ENCODE measurements at regions of chr19 and their contacts with region 1.

Region 1: GRCh38 chr19:20776083-20777076 is at the start of gene ZNF66:
- DNase-seq: peak; percentile 95
- H3K4me3 Mint-ChIP-seq: peak within 1 kb of the TSS; percentile 99
- H3K27ac Mint-ChIP-seq: peak within 1 kb of the TSS; percentile 94
- H3K4me1 Mint-ChIP-seq: peaks cover 7% of the 10 kb centered on the region
- H3K27me3 Mint-ChIP-seq: no peaks in the 10 kb centered on the region
- total RNA-seq, gene ZNF66: 6.0 to 7.5 TPM

Region 2: DNA sequence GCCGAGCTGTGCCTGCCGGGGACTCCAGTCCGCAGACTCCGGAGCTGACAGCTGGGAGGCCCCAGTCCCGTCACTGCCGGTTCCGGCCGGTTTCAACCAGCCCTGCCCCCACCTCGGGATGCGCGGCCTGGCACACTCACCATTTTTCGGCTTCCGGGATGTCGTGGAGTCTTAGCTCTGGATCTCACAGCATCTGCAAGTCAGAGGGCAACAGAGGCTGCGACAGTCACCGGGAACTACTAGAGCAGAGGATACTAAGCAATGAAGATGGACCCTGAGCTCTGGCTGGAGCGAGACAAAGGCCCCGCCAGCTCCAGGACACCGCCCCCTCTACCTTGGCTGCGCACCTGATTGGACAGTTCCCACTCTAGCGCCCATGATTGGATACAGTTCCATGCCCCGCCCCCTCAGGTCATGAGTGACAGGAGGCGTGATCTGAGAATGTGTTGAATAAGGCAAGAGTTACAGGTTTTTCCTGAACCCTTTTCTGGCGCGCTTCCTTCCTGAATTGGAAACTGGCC is 737.1 kb before region 1 on chr19 and contains the start of gene ZNF682:
- CTCF ChIA-PET with region 1: no interaction called
- POLR2A ChIA-PET with region 1: interaction called, 10 read pairs
- DNase-seq: peak; percentile 92
- H3K4me3 Mint-ChIP-seq: peak within 1 kb of the TSS; percentile 92
- H3K27ac Mint-ChIP-seq: peak within 1 kb of the TSS; percentile 89
- H3K4me1 Mint-ChIP-seq: peaks cover 20% of the 10 kb centered on the region
- H3K27me3 Mint-ChIP-seq: no peaks in the 10 kb centered on the region
- total RNA-seq, gene ZNF682: 4.8 to 5.5 TPM

Region 3: GRCh38 chr19:20423381-20424197 is 352.8 kb before region 1 on chr19:
- CTCF ChIA-PET with region 1: interaction called, 4 read pairs
- POLR2A ChIA-PET with region 1: interaction called, 22 read pairs
- DNase-seq: peak; percentile 42
- H3K4me3 Mint-ChIP-seq: peak overlapping the region; percentile 97
- H3K27ac Mint-ChIP-seq: peak overlapping the region; percentile 97
- H3K4me1 Mint-ChIP-seq: peaks cover 13% of the 10 kb centered on the region
- H3K27me3 Mint-ChIP-seq: no peaks in the 10 kb centered on the region

Region 4: DNA sequence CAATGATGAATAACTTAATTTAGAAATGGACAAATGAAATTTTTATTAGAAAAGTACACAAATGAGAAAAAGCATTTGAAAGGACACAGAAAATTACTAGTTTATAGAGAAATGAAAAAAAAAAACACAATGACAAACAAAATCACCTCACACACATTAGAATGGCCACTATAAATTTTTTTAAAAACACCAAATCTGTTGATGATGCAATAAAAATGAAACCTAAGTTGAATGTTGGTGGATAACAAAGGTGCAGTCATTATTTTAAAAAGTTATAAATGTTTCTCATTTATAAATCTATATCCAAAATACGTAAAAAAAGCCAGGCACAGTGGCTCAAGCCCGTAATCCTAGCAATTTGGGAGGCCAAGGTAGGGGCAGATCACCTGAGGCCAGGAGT is 135.8 kb before region 1 on chr19:
- CTCF ChIA-PET with region 1: no interaction called
- POLR2A ChIA-PET with region 1: no interaction called
- DNase-seq: no peak
- H3K4me3 Mint-ChIP-seq: no peak overlapping the region
- H3K27ac Mint-ChIP-seq: no peak overlapping the region
- H3K4me1 Mint-ChIP-seq: no peaks in the 10 kb centered on the region
- H3K27me3 Mint-ChIP-seq: no peaks in the 10 kb centered on the region

Region 5: GRCh38 chr19:20661150-20661819 is 115.1 kb before region 1 on chr19 and contains the start of gene ZNF626:
- CTCF ChIA-PET with region 1: interaction called, 5 read pairs
- POLR2A ChIA-PET with region 1: interaction called, 32 read pairs
- DNase-seq: peak; percentile 92
- H3K4me3 Mint-ChIP-seq: peak within 1 kb of the TSS; percentile 88
- H3K27ac Mint-ChIP-seq: peak within 1 kb of the TSS; percentile 84
- H3K4me1 Mint-ChIP-seq: peaks cover 23% of the 10 kb centered on the region
- H3K27me3 Mint-ChIP-seq: no peaks in the 10 kb centered on the region
- total RNA-seq, gene ZNF626: 7.6 to 8.5 TPM

Region 6: DNA sequence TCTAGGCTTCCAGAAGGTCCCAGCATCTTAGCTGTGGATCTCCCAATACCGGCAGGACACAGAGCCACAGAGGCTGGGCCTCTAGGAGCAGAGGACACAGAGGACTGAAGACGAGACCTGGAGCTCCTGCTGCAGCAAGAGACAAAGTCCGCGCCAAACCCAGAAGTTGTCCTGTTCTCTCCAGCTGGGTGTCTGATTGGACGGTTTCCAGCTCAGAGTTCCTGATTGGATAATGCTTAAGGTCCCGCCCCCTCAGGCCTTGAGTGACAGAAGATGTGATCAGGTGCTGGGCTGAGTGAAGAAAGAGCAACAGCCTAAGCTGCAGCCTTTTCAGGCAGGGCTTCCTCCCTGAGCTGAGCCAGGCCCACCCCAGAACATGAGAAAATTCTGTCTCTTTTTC is 86.8 kb after region 1 on chr19:
- CTCF ChIA-PET with region 1: no interaction called
- POLR2A ChIA-PET with region 1: no interaction called
- DNase-seq: no peak
- H3K4me3 Mint-ChIP-seq: no peak overlapping the region
- H3K27ac Mint-ChIP-seq: no peak overlapping the region
- H3K4me1 Mint-ChIP-seq: no peaks in the 10 kb centered on the region
- H3K27me3 Mint-ChIP-seq: no peaks in the 10 kb centered on the region

Region 7: DNA sequence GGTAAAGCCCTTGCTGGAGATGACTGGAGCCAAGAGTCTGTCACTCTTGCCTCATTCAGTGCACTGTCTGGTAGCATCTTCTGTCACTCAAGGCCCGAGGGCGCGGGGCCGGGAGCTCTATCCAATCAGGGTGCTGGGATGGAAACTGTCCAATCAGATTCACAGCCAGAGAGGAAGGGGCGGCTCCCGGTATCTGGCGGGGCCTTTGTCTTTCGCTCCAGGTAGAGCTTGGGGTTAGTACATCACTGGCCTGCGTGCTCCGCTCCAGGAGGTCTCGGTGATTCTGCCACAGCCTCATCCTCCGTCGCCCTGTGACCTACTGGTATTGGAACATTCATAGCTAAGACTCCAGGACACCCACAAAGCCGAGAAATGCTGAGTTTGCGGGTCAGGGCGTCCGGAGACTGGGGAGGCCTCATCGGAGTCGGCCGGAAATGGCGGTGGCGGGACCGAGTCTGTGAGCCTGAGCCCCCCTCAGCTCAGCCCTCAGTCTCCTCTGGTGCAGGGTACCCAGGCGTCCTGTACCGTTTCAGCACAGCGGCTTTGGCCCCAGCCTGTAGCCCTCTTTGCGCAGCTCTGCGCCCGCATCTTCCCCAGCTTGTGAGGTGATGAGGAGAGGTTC is 223.5 kb after region 1 on chr19:
- CTCF ChIA-PET with region 1: no interaction called
- POLR2A ChIA-PET with region 1: interaction called, 20 read pairs
- DNase-seq: peak; percentile 88
- H3K4me3 Mint-ChIP-seq: peak overlapping the region; percentile 85
- H3K27ac Mint-ChIP-seq: peak overlapping the region; percentile 79
- H3K4me1 Mint-ChIP-seq: peaks cover 20% of the 10 kb centered on the region
- H3K27me3 Mint-ChIP-seq: no peaks in the 10 kb centered on the region

Region 8: GRCh38 chr19:21065336-21065735 is 289.0 kb after region 1 on chr19:
- CTCF ChIA-PET with region 1: no interaction called
- POLR2A ChIA-PET with region 1: no interaction called
- DNase-seq: no peak
- H3K4me3 Mint-ChIP-seq: no peak overlapping the region
- H3K27ac Mint-ChIP-seq: no peak overlapping the region
- H3K4me1 Mint-ChIP-seq: no peaks in the 10 kb centered on the region
- H3K27me3 Mint-ChIP-seq: no peaks in the 10 kb centered on the region

Region 9: GRCh38 chr19:21082011-21082975 is 305.9 kb after region 1 on chr19 and contains the start of gene ZNF714:
- CTCF ChIA-PET with region 1: no interaction called
- POLR2A ChIA-PET with region 1: interaction called, 16 read pairs
- DNase-seq: peak; percentile 91
- H3K4me3 Mint-ChIP-seq: peak within 1 kb of the TSS; percentile 99
- H3K27ac Mint-ChIP-seq: peak within 1 kb of the TSS; percentile 98
- H3K4me1 Mint-ChIP-seq: peaks cover 34% of the 10 kb centered on the region
- H3K27me3 Mint-ChIP-seq: no peaks in the 10 kb centered on the region
- total RNA-seq, gene ZNF714: 20.4 to 23.7 TPM

Region 10: DNA sequence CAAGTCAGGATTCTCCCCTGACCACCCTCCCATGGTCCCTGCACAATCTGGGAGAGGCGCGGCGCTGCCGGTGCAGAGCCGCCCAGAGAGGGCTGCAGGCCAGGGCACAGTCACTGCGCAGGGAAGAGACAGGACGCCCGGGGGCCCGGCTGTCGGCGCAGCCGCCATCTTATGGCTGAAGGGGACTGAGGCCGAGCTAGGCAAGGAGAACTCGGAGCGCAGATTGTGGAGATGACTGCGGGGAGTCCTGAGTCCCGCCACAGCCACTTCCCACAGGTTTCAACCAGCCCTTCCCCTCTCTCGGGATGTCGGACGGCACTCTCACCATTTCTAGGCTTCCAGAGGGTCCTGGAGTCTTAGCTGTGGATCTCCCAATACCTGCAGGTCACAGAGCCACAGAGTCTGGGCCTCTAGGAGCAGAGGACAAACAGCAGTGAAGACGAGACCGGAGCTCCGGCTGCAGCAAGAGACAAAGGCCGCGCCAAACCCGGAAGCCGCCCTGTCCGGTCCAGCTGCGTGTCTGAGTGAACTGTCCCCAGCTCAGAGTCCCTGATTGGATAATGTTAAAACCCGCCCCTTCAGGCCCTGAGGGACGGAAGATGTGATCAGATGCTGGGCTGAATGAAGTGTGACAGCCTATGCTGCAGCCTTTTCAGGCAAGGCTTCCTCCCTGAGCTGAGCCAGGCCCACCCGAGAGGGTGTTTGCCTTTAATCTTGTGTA is 552.7 kb after region 1 on chr19 and contains the start of gene ZNF708:
- CTCF ChIA-PET with region 1: no interaction called
- POLR2A ChIA-PET with region 1: interaction called, 18 read pairs
- DNase-seq: peak; percentile 84
- H3K4me3 Mint-ChIP-seq: peak within 1 kb of the TSS; percentile 97
- H3K27ac Mint-ChIP-seq: peak within 1 kb of the TSS; percentile 99
- H3K4me1 Mint-ChIP-seq: peaks cover 34% of the 10 kb centered on the region
- H3K27me3 Mint-ChIP-seq: no peaks in the 10 kb centered on the region
- total RNA-seq, gene ZNF708: 14.8 to 16.7 TPM

Measured in activated CD4-positive, alpha-beta memory T cell treated with anti-CD3 and anti-CD28 coated beads, Interleukin-2, amount 10 ng/mL, durations not matched to agents 7 days and 5 days (primary cell).